ENCODE measurements at regions of chr9 and their contacts with region 1.

Region 1: DNA sequence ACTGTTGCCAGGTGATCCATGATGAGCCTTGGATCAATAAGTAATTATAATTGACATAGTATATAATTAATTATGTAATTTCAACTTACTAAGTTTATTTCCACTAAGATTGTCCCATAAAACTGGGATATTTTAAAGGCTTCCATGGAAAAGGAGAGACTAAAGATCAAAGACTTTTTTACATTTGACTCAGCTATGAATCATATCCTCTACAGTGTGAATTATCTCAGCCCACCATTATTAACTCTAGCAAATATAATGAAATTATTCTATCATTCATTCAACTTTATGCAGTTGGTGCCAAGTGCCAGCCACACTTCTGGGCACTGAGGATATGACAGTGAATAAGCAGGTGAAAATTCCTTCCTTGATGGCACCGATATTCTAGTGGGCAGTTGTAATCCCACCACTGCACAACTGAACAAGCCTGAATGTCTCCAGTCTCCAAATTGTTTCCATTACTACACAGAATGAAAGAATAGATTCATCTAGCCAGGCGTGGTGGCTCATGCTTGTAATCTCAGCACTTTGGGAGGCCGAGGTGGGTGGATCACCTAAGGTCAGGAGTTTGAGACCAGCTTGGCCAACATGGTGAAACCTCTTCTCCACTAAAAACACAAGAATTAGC is 21.9 kb upstream of the TXN start:
- DNase-seq: peak in 1 of 2 experiments; percentile 61
- H3K4me3 ChIP-seq: no peak overlapping the region
- H3K27ac ChIP-seq: peak overlapping the region; percentile 63
- H3K4me1 ChIP-seq: peaks cover 40% of the 10 kb centered on the region
- H3K27me3 ChIP-seq: no peaks in the 10 kb centered on the region
- CTCF ChIP-seq: no peak

Region 2: GRCh38 chr9:109453210-109453842 is 824.9 kb before region 1 on chr9:
- CTCF ChIA-PET with region 1: no interaction called
- POLR2A ChIA-PET with region 1: interaction called, 20 read pairs
- intact Hi-C with region 1: no loop called
- DNase-seq: peak; percentile 85 to 97
- H3K4me3 ChIP-seq: 0 out of 2 replicates have a peak overlapping the region, but pooled peaks have one; percentile 9
- H3K27ac ChIP-seq: peak overlapping the region; percentile 97
- H3K4me1 ChIP-seq: peaks cover 38% of the 10 kb centered on the region
- H3K27me3 ChIP-seq: no peaks in the 10 kb centered on the region
- CTCF ChIP-seq: no peak

Region 3: DNA sequence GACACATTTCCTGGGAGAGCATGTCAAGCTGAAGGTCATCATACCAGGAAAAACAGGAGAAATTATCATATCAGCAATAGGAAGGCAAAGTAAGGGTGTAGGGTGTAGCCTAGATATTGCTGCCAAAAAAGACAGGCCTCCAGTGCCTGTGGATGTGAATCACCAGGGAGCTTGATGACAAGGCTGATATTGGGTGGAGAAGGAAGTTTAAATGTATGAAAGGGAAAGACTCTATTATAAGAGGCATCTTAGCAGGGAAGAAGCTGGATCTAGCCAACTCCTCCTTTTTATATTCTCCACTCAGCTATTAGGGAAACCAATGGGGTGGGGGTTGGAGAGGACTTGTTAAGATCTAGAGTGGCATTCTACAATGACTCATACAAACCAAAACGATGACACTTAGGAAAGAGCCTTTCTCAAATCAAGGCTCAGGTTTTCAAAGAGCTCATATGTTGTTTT is 72.8 kb after region 1 on chr9:
- CTCF ChIA-PET with region 1: no interaction called
- POLR2A ChIA-PET with region 1: no interaction called
- intact Hi-C with region 1: loop called (anchors 2 kb)
- DNase-seq: peak; percentile 72 to 97
- H3K4me3 ChIP-seq: no peak overlapping the region
- H3K27ac ChIP-seq: peak overlapping the region; percentile 73
- H3K4me1 ChIP-seq: peaks cover 23% of the 10 kb centered on the region
- H3K27me3 ChIP-seq: no peaks in the 10 kb centered on the region
- CTCF ChIP-seq: no peak